Activated T-helper 1 cell treated with anti-CD3 and anti-CD28 coated beads, Interleukin-12 subunit alpha, Interleukin-12 subunit beta, Interleukin-2, Interleukin-4 antibody, amounts not matched to agents 30 ng/mL and 10 ng/mL and 1 ng/mL, durations not matched to agents 14 hours and 24 hours and 36 hours (primary cell): ENCODE measurements at regions of chr19 and their contacts with region 1.

Region 1: GRCh38 chr19:48872182-48872883 is at the start of gene PPP1R15A:
- DNase-seq: peak; percentile 99
- H3K4me3 Mint-ChIP-seq: peak within 1 kb of the TSS; percentile 97
- H3K27ac Mint-ChIP-seq: peak within 1 kb of the TSS; percentile 99
- H3K4me1 Mint-ChIP-seq: peaks cover 42% of the 10 kb centered on the region
- H3K27me3 Mint-ChIP-seq: peaks cover 4% of the 10 kb centered on the region
- total RNA-seq, gene PPP1R15A: 53.1 and 53.7 TPM in 2 replicates

Region 2: GRCh38 chr19:48683349-48683748 is 189.0 kb before region 1 on chr19:
- intact Hi-C with region 1: no loop called
- DNase-seq: no peak
- H3K4me3 Mint-ChIP-seq: no peak overlapping the region
- H3K27ac Mint-ChIP-seq: no peak overlapping the region
- H3K4me1 Mint-ChIP-seq: no peaks in the 10 kb centered on the region
- H3K27me3 Mint-ChIP-seq: no peaks in the 10 kb centered on the region

Region 3: DNA sequence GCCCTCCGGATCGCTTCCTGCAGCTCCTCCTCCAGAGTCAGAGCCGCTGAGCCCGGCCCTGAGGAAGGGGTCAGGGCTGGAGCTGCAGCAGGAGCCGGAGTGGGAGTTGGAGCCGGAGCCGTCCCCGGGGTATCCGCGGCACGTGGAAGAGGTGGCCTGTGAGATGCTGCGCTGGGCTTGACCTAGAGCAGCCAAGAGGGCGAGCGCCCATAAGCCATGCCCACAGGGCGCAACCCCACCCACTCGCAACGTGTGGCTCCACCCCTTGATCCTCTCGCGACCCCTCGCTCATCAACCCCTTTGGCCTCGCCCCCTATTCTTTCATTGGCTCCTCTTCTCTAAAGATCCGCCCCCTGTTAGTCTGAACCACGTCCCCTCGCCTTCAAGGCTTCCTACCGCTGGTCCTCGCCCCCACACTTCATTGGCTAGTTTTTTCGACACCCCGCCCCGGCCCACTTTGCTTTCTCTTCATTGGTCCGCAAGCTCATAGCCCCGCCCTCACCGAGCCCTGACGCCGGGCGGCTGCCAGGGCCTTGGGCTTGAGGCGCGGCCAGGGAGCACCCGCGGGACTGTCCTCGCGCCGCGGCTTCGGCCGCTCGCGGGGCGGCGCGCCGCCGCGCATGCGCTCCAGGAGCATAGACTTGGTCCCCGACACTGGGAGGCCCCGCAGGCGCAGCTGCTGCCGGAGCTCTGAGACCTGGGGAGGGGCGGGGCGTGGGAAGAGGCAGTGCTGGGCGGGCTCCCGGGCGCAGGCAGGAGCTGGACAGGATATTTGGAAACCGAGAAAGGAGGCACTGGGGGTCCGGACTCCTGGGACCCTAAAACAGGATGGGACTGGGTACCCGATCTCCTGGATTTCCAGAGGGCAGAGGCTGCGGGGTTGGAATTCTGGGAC is 158.2 kb before region 1 on chr19:
- intact Hi-C with region 1: loop called (anchors 1 kb)
- DNase-seq: peak; percentile 98
- H3K4me3 Mint-ChIP-seq: peak overlapping the region; percentile 80
- H3K27ac Mint-ChIP-seq: peak overlapping the region; percentile 83
- H3K4me1 Mint-ChIP-seq: peaks cover 8% of the 10 kb centered on the region
- H3K27me3 Mint-ChIP-seq: peaks cover 1% of the 10 kb centered on the region

Region 4: GRCh38 chr19:48933382-48933932 is 61.1 kb after region 1 on chr19 and contains the start of gene DHDH:
- intact Hi-C with region 1: loop called (anchors 2 kb)
- DNase-seq: peak; percentile 85
- H3K4me3 Mint-ChIP-seq: peak within 1 kb of the TSS; percentile 83
- H3K27ac Mint-ChIP-seq: peak within 1 kb of the TSS; percentile 61
- H3K4me1 Mint-ChIP-seq: peaks cover 14% of the 10 kb centered on the region
- H3K27me3 Mint-ChIP-seq: peaks cover 11% of the 10 kb centered on the region
- total RNA-seq, gene DHDH: not detected in 2 replicates

Region 5: GRCh38 chr19:49118565-49119410 is 246.5 kb after region 1 on chr19 and contains the start of gene C19orf73:
- intact Hi-C with region 1: loop called (anchors 2 kb)
- DNase-seq: peak; percentile 94
- H3K4me3 Mint-ChIP-seq: peak within 1 kb of the TSS; percentile 86
- H3K27ac Mint-ChIP-seq: peak within 1 kb of the TSS; percentile 85
- H3K4me1 Mint-ChIP-seq: peaks cover 34% of the 10 kb centered on the region
- H3K27me3 Mint-ChIP-seq: peaks cover 17% of the 10 kb centered on the region
- total RNA-seq, gene C19orf73: 2.6 and 2.9 TPM in 2 replicates

Region 6: DNA sequence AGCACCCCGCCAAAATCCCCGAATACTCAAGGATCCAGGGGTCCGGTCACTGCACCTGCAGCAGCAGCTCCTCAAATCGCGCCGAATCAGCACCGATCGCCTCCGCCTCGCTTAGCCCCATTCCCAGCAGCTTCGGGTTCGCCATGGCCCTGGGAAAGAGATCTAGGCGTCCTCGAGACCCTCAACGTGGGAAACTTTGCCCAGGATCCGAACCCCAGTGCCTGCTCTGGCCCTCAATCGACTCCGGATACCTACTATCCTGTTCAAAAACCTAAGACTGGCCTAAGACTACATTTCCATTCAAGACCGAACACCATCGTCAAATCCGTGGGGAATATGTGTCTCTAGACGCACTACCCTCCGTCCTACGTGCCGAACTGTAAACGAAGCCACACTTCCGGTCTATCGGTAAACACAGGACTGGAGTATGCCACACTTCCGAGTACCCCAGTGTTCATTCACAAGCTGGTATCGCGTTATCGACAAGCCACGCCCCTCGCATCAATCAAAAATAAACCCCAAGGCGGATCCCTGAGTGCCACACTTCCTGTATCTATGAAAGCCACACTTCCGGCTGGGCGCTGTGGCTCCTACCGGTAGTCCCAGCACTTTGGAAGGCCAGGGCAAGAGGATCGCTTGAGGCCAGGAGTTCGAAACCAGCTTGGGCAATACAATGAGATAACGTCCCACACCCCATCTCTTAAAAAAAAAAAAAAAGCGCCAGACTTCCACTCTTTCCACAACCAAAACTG is 579.3 kb after region 1 on chr19 and contains the start of gene PIH1D1:
- intact Hi-C with region 1: loop called (anchors 10 kb)
- DNase-seq: peak; percentile 94
- H3K4me3 Mint-ChIP-seq: peak within 1 kb of the TSS; percentile 96
- H3K27ac Mint-ChIP-seq: peak within 1 kb of the TSS; percentile 99
- H3K4me1 Mint-ChIP-seq: peaks cover 55% of the 10 kb centered on the region
- H3K27me3 Mint-ChIP-seq: no peaks in the 10 kb centered on the region
- total RNA-seq, gene PIH1D1: 124 and 126 TPM in 2 replicates